ENCODE measurements at regions of chr9 and their contacts with region 1.

Region 1: GRCh38 chr9:133417541-133418461 is at the start of gene REXO4:
- DNase-seq: peak; percentile 90
- H3K4me3 ChIP-seq: peak within 1 kb of the TSS; percentile 65 to 88 (median 71)
- H3K27ac ChIP-seq: peak within 1 kb of the TSS; percentile 81 to 87 (median 84)
- H3K4me1 ChIP-seq: peaks cover 0 to 31% (median 23%) of the 10 kb centered on the region in 4 donors
- H3K27me3 ChIP-seq: no peaks in the 10 kb centered on the region
- CTCF ChIP-seq: no peak
- EP300 ChIP-seq: no peak
- POLR2A ChIP-seq: no peak
- total RNA-seq, gene REXO4: 16.3 to 22.2 (median 18.8) TPM

Region 2: GRCh38 chr9:133478851-133479711 is 61.3 kb after region 1 on chr9 and contains the start of gene SLC2A6:
- intact Hi-C with region 1: loop called (anchors 5 kb)
- DNase-seq: peak; percentile 92
- H3K4me3 ChIP-seq: peak within 1 kb of the TSS; percentile 26 to 64 (median 50)
- H3K27ac ChIP-seq: peak within 1 kb of the TSS; percentile 44 to 71 (median 52)
- H3K4me1 ChIP-seq: peaks cover 0 to 22% (median 17%) of the 10 kb centered on the region in 4 donors
- H3K27me3 ChIP-seq: no peaks in the 10 kb centered on the region
- CTCF ChIP-seq: no peak
- EP300 ChIP-seq: no peak
- POLR2A ChIP-seq: no peak
- total RNA-seq, gene SLC2A6: 1.4 to 2.7 (median 2.0) TPM

Region 3: GRCh38 chr9:133737774-133738639 is 320.2 kb after region 1 on chr9 and contains the start of gene SARDH:
- intact Hi-C with region 1: loop called (anchors 10 kb)
- DNase-seq: peak; percentile 73
- H3K4me3 ChIP-seq: peak within 1 kb of the TSS in 3 of 4 donors; percentile 40 to 51 (median 49)
- H3K27ac ChIP-seq: no peak within 1 kb of the TSS
- H3K4me1 ChIP-seq: peaks cover 0 to 16% (median 15%) of the 10 kb centered on the region in 4 donors
- H3K27me3 ChIP-seq: no peaks in the 10 kb centered on the region
- CTCF ChIP-seq: no peak
- EP300 ChIP-seq: no peak
- POLR2A ChIP-seq: no peak
- total RNA-seq, gene SARDH: 0.49 to 3.0 (median 2.4) TPM

Measured in sigmoid colon (tissue), 7 donors.